T-cell (primary cell): ENCODE measurements at regions of chrX and their contacts with region 1.

Region 1: GRCh38 chrX:138877746-138878145 is 166.2 kb upstream of the FGF13 start:
- DNase-seq: no peak
- ATAC-seq: no peak
- H3K4me3 ChIP-seq: no peak overlapping the region
- H3K4me3 Mint-ChIP-seq: no peak overlapping the region
- H3K27ac ChIP-seq: no peak overlapping the region
- H3K27ac Mint-ChIP-seq: no peak overlapping the region
- H3K4me1 ChIP-seq: no peaks in the 10 kb centered on the region
- H3K4me1 Mint-ChIP-seq: no peaks in the 10 kb centered on the region
- H3K27me3 ChIP-seq: no peaks in the 10 kb centered on the region
- H3K27me3 Mint-ChIP-seq: peaks cover 0 to 7% of the 10 kb centered on the region in 2 donors

Region 2: GRCh38 chrX:138847928-138848327 is 29.8 kb before region 1 on chrX:
- CTCF ChIA-PET with region 1: no interaction called
- POLR2A ChIA-PET with region 1: no interaction called
- DNase-seq: no peak
- ATAC-seq: no peak
- H3K4me3 ChIP-seq: no peak overlapping the region
- H3K4me3 Mint-ChIP-seq: no peak overlapping the region
- H3K27ac ChIP-seq: no peak overlapping the region
- H3K27ac Mint-ChIP-seq: no peak overlapping the region
- H3K4me1 ChIP-seq: no peaks in the 10 kb centered on the region
- H3K4me1 Mint-ChIP-seq: no peaks in the 10 kb centered on the region
- H3K27me3 ChIP-seq: no peaks in the 10 kb centered on the region
- H3K27me3 Mint-ChIP-seq: peaks cover 0 to 23% of the 10 kb centered on the region in 2 donors

Region 3: DNA sequence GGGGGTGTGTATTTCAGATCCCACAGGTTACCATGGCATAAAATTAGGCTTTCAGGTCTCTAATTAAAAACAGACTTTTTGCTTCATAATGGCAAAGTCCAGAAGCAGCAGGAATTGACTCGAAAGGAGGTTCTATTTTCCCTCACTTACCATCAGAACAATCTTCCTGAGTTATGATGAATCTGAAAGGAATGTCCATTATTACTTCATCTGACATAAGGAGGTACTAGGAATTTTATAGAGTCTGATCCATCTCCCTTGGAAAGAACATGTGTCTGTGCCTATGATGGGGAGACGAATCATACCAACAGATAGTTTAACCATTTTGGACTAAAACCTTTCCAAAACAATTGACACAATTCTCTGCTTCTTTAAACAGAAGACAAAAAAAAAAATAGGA is 40.0 kb after region 1 on chrX:
- CTCF ChIA-PET with region 1: no interaction called
- POLR2A ChIA-PET with region 1: interaction called in 1 of 2 experiments, 12 read pairs
- DNase-seq: no peak
- ATAC-seq: no peak
- H3K4me3 ChIP-seq: no peak overlapping the region
- H3K4me3 Mint-ChIP-seq: no peak overlapping the region
- H3K27ac ChIP-seq: no peak overlapping the region
- H3K27ac Mint-ChIP-seq: no peak overlapping the region
- H3K4me1 ChIP-seq: no peaks in the 10 kb centered on the region
- H3K4me1 Mint-ChIP-seq: no peaks in the 10 kb centered on the region
- H3K27me3 ChIP-seq: no peaks in the 10 kb centered on the region
- H3K27me3 Mint-ChIP-seq: peaks cover 0 to 26% of the 10 kb centered on the region in 2 donors